Caco-2 (cell line): ENCODE measurements at regions of chr15 and their contacts with region 1.

Region 1: GRCh38 chr15:78506971-78507830 is at the start of gene HYKK:
- DNase-seq: peak; percentile 96 to 97
- H3K4me3 ChIP-seq: peak within 1 kb of the TSS; percentile 77
- H3K4me3 Mint-ChIP-seq: peak within 1 kb of the TSS; percentile 80
- H3K27ac Mint-ChIP-seq: peak within 1 kb of the TSS; percentile 39
- H3K4me1 ChIP-seq: 0 out of 2 replicates have a peak, but pooled peaks cover 4% of the 10 kb centered on the region
- H3K4me1 Mint-ChIP-seq: peaks cover 7% of the 10 kb centered on the region
- H3K27me3 ChIP-seq: no peaks in the 10 kb centered on the region
- H3K27me3 Mint-ChIP-seq: no peaks in the 10 kb centered on the region
- CTCF ChIP-seq: no peak
- total RNA-seq, gene HYKK: 6.5 and 6.8 TPM in 2 replicates

Region 2: DNA sequence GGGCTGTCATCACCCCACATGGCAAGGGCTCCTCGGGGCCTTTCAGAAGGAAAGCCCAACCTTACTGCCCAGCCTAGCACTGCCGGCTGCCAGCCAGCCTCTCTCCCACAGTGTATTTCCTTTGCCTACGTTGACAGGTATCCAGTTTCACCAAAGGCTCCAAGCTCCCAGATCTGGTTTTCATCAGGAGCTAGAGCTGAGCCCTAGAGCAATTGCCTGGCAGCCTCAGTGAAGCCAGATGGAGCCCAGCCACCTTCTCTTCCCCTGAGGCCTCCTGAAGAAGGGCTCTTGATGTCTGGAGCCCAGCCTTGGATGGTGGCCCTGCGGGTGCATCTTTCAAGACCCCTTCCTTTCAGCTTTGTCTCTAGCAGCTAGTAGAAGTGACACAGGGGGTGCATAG is 146.8 kb before region 1 on chr15:
- CTCF ChIA-PET with region 1: no interaction called
- POLR2A ChIA-PET with region 1: no interaction called
- intact Hi-C with region 1: no loop called
- DNase-seq: no peak
- H3K4me3 ChIP-seq: no peak overlapping the region
- H3K4me3 Mint-ChIP-seq: no peak overlapping the region
- H3K27ac Mint-ChIP-seq: no peak overlapping the region
- H3K4me1 ChIP-seq: peaks cover 27% of the 10 kb centered on the region
- H3K4me1 Mint-ChIP-seq: peaks cover 23% of the 10 kb centered on the region
- H3K27me3 ChIP-seq: no peaks in the 10 kb centered on the region
- H3K27me3 Mint-ChIP-seq: no peaks in the 10 kb centered on the region
- CTCF ChIP-seq: no peak

Region 3: GRCh38 chr15:78437762-78438302 is 69.4 kb before region 1 on chr15 and contains the start of gene IREB2:
- CTCF ChIA-PET with region 1: no interaction called
- POLR2A ChIA-PET with region 1: interaction called, 5 read pairs
- intact Hi-C with region 1: loop called (anchors 1 kb)
- DNase-seq: peak; percentile 95 to 97
- H3K4me3 ChIP-seq: peak within 1 kb of the TSS; percentile 99
- H3K4me3 Mint-ChIP-seq: peak within 1 kb of the TSS; percentile 76
- H3K27ac Mint-ChIP-seq: peak within 1 kb of the TSS; percentile 4
- H3K4me1 ChIP-seq: peaks cover 18% of the 10 kb centered on the region
- H3K4me1 Mint-ChIP-seq: no peaks in the 10 kb centered on the region
- H3K27me3 ChIP-seq: no peaks in the 10 kb centered on the region
- H3K27me3 Mint-ChIP-seq: no peaks in the 10 kb centered on the region
- CTCF ChIP-seq: no peak
- total RNA-seq, gene IREB2: 77.6 and 82.9 TPM in 2 replicates

Region 4: DNA sequence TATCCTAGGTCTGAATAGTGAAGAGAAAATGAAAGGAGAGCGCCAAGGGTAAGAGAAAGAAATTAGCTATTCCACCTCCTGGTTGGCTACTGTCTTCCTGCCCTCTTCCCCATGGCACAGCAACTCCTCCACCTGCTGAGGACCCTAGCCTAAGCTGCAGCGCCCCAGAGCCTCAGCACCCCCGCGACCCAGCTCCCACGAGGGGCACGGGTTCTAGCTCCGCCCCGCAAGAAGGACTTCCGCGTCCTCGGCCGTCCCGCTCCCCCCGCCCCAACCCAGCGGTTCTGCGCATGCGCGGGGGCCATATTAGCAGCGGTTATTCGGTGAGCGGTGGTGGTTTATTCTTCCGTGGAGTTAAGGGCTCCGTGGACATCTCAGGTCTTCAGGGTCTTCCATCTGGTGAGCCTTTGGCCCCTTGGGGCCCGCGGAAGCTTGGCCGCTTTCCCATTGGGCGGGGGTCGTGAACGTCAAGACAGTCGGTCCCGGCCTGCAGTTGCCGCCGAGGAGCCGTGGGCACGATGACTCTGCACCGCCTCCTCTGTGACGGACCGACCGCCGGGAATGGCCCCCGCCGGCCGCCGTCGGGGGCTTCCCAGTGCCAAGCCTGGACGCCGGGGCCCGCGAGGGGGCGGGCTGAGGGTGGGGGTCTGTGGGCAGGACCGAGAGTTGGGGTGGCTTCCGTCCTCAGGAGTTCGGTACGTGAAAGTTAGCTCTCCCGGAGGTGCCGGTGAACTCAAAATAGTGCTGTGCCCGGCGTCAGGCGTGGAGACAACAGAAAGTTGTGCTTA is 33.1 kb after region 1 on chr15 and contains the start of gene PSMA4:
- CTCF ChIA-PET with region 1: interaction called, 4 read pairs
- POLR2A ChIA-PET with region 1: no interaction called
- intact Hi-C with region 1: loop called (anchors 1 kb)
- DNase-seq: peak; percentile 86 to 90
- H3K4me3 ChIP-seq: peak within 1 kb of the TSS; percentile 75
- H3K4me3 Mint-ChIP-seq: peak within 1 kb of the TSS; percentile 91
- H3K27ac Mint-ChIP-seq: peak within 1 kb of the TSS; percentile 96
- H3K4me1 ChIP-seq: no peaks in the 10 kb centered on the region
- H3K4me1 Mint-ChIP-seq: peaks cover 14% of the 10 kb centered on the region
- H3K27me3 ChIP-seq: no peaks in the 10 kb centered on the region
- H3K27me3 Mint-ChIP-seq: no peaks in the 10 kb centered on the region
- CTCF ChIP-seq: no peak
- total RNA-seq, gene PSMA4: 276 and 285 TPM in 2 replicates

Region 5: GRCh38 chr15:78565097-78565951 is 58.1 kb after region 1 on chr15 and contains the start of gene CHRNA5:
- CTCF ChIA-PET with region 1: no interaction called
- POLR2A ChIA-PET with region 1: interaction called, 12 read pairs
- intact Hi-C with region 1: no loop called
- DNase-seq: peak; percentile 85 to 92
- H3K4me3 ChIP-seq: peak within 1 kb of the TSS; percentile 64
- H3K4me3 Mint-ChIP-seq: peak within 1 kb of the TSS; percentile 91
- H3K27ac Mint-ChIP-seq: peak within 1 kb of the TSS; percentile 80
- H3K4me1 ChIP-seq: no peaks in the 10 kb centered on the region
- H3K4me1 Mint-ChIP-seq: peaks cover 13% of the 10 kb centered on the region
- H3K27me3 ChIP-seq: no peaks in the 10 kb centered on the region
- H3K27me3 Mint-ChIP-seq: peaks cover 2% of the 10 kb centered on the region
- CTCF ChIP-seq: no peak
- total RNA-seq, gene CHRNA5: 12.0 and 12.9 TPM in 2 replicates